Activated naive CD4-positive, alpha-beta T cell treated with anti-CD3 and anti-CD28 coated beads for 36 hours (primary cell): ENCODE measurements at regions of chr13 and their contacts with region 1.

Region 1: DNA sequence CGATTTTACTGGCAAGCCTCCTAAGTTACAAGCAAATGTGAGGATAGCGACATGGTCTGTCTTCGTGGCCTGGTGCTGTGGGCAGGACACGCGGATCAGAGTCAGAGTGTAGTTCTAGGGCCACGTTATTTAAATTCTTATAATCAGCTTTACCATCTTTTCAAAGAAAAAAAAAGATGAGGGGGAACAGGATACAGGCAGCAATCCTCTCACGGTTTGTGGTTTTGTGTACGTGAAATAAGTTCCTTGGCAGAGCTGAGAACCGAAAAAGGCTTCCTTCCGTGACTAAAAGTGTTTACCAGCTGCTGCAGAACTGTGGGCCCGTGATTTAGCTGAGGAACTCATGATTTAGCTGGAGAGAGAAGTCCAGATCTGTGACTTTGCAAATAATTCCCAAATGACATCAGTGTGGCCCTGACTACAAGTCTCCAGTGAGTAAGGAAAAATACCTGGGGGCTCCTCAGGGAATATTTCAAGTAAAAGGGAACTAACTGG is 27.2 kb downstream of the RCBTB2 start:
- DNase-seq: peak; percentile 70
- H3K4me3 Mint-ChIP-seq: peak overlapping the region; percentile 59
- H3K27ac Mint-ChIP-seq: peak overlapping the region; percentile 75
- H3K4me1 Mint-ChIP-seq: peaks cover 56% of the 10 kb centered on the region
- H3K27me3 Mint-ChIP-seq: no peaks in the 10 kb centered on the region

Region 2: DNA sequence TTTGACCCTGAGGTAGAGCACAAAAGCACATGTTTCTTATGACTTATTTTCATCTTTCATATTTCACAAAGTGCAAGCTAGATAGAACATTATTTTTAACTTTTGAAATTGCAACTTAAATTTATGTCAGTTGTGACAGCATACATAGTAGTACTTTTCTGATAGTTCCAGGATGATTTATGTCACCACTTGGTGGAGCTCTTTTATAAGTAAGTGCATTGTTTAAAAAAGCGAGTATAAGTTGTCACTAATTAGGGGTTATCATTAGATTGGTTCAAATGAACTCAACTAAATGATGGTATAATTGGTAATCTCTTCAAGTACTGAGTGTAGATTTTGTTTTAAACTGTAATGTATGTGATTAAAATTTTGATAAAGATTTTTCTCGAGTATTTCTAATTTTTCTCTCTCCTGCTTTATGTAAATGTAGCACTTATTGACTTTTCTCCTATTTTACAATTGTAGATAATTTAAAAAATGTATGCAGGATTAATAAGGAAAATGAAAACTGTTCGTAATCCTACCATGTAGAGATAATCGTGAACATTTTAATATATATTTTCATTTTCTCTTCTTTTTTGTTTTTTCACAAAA is 171.0 kb before region 1 on chr13:
- CTCF ChIA-PET with region 1: no interaction called
- intact Hi-C with region 1: loop called (anchors 2 kb)
- DNase-seq: no peak
- H3K4me3 Mint-ChIP-seq: no peak overlapping the region
- H3K27ac Mint-ChIP-seq: no peak overlapping the region
- H3K4me1 Mint-ChIP-seq: peaks cover 3% of the 10 kb centered on the region
- H3K27me3 Mint-ChIP-seq: no peaks in the 10 kb centered on the region

Region 3: GRCh38 chr13:48412881-48413351 is 92.7 kb before region 1 on chr13 and contains the start of gene LPAR6:
- CTCF ChIA-PET with region 1: no interaction called
- intact Hi-C with region 1: loop called (anchors 1 kb)
- DNase-seq: peak; percentile 20
- H3K4me3 Mint-ChIP-seq: peak within 1 kb of the TSS; percentile 84
- H3K27ac Mint-ChIP-seq: peak within 1 kb of the TSS; percentile 92
- H3K4me1 Mint-ChIP-seq: peaks cover 33% of the 10 kb centered on the region
- H3K27me3 Mint-ChIP-seq: no peaks in the 10 kb centered on the region
- total RNA-seq, gene LPAR6: 6.1 to 6.6 TPM

Region 4: DNA sequence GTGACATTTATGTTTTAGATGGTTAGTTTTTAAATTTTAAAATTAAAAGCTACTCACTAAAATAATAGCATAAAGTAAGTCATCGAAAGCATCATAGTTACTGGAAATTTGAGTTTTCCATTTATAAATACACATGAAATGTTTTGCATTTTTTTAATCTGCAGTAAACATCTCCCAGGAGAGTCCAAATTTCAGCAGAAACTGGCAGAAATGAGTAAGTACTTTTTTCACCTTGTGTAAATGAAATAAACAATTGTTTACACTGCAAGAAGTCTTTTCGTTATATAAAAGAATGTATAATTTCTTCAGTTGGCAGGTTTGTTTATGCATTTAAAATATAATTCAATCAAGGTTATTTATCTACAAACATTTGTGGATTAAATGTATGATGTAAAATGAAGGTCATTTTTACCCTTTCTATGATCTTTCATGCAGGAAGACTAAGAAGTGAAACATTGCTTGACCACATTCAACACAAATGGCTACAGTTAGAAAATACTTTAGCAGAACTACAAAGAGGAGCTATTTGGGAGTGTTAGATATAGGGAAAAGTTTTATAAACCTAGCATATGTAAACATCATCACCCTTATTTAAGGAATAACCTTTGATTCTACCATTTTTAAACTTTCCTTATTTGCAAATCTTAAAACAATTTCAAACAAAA is 28.3 kb before region 1 on chr13:
- CTCF ChIA-PET with region 1: no interaction called
- intact Hi-C with region 1: no loop called
- DNase-seq: no peak
- H3K4me3 Mint-ChIP-seq: no peak overlapping the region
- H3K27ac Mint-ChIP-seq: no peak overlapping the region
- H3K4me1 Mint-ChIP-seq: no peaks in the 10 kb centered on the region
- H3K27me3 Mint-ChIP-seq: no peaks in the 10 kb centered on the region

Region 5: GRCh38 chr13:48492470-48493065 is 13.1 kb before region 1 on chr13:
- CTCF ChIA-PET with region 1: interaction called, 4 read pairs
- intact Hi-C with region 1: loop called (anchors 1 kb)
- DNase-seq: peak; percentile 74
- H3K4me3 Mint-ChIP-seq: no peak overlapping the region
- H3K27ac Mint-ChIP-seq: no peak overlapping the region
- H3K4me1 Mint-ChIP-seq: peaks cover 39% of the 10 kb centered on the region
- H3K27me3 Mint-ChIP-seq: no peaks in the 10 kb centered on the region

Region 6: GRCh38 chr13:48562296-48563066 is 56.8 kb after region 1 on chr13:
- CTCF ChIA-PET with region 1: interaction called, 3 read pairs
- intact Hi-C with region 1: loop called (anchors 1 kb)
- DNase-seq: peak; percentile 76
- H3K4me3 Mint-ChIP-seq: no peak overlapping the region
- H3K27ac Mint-ChIP-seq: no peak overlapping the region
- H3K4me1 Mint-ChIP-seq: peaks cover 23% of the 10 kb centered on the region
- H3K27me3 Mint-ChIP-seq: peaks cover 47% of the 10 kb centered on the region

Region 7: GRCh38 chr13:48580185-48580803 is 74.7 kb after region 1 on chr13:
- CTCF ChIA-PET with region 1: interaction called, 4 read pairs
- intact Hi-C with region 1: loop called (anchors 1 kb)
- DNase-seq: peak; percentile 88
- H3K4me3 Mint-ChIP-seq: no peak overlapping the region
- H3K27ac Mint-ChIP-seq: no peak overlapping the region
- H3K4me1 Mint-ChIP-seq: peaks cover 2% of the 10 kb centered on the region
- H3K27me3 Mint-ChIP-seq: peaks cover 6% of the 10 kb centered on the region